A673 (cell line): ENCODE measurements at regions of chr1 and their contacts with region 1.

Region 1: GRCh38 chr1:48677306-48678287 is 99.1 kb downstream of the BEND5 start:
- DNase-seq: peak; percentile 73
- H3K4me3 ChIP-seq: no peak overlapping the region
- H3K27ac ChIP-seq: no peak overlapping the region
- H3K4me1 ChIP-seq: no peaks in the 10 kb centered on the region
- H3K27me3 ChIP-seq: no peaks in the 10 kb centered on the region
- CTCF ChIP-seq: peak; percentile 86

Region 2: GRCh38 chr1:48547251-48548220 is 130.1 kb before region 1 on chr1:
- CTCF ChIA-PET with region 1: no interaction called
- POLR2A ChIA-PET with region 1: no interaction called
- intact Hi-C with region 1: no loop called
- DNase-seq: no peak
- H3K4me3 ChIP-seq: no peak overlapping the region
- H3K27ac ChIP-seq: no peak overlapping the region
- H3K4me1 ChIP-seq: no peaks in the 10 kb centered on the region
- H3K27me3 ChIP-seq: no peaks in the 10 kb centered on the region
- CTCF ChIP-seq: no peak

Region 3: GRCh38 chr1:48817505-48818114 is 140.0 kb after region 1 on chr1:
- CTCF ChIA-PET with region 1: interaction called, 25 read pairs
- POLR2A ChIA-PET with region 1: no interaction called
- intact Hi-C with region 1: loop called (anchors 1 kb)
- DNase-seq: peak; percentile 53
- H3K4me3 ChIP-seq: no peak overlapping the region
- H3K27ac ChIP-seq: no peak overlapping the region
- H3K4me1 ChIP-seq: no peaks in the 10 kb centered on the region
- H3K27me3 ChIP-seq: no peaks in the 10 kb centered on the region
- CTCF ChIP-seq: peak; percentile 80

Region 4: GRCh38 chr1:48988633-48989197 is 311.1 kb after region 1 on chr1:
- CTCF ChIA-PET with region 1: no interaction called
- POLR2A ChIA-PET with region 1: no interaction called
- intact Hi-C with region 1: no loop called
- DNase-seq: no peak
- H3K4me3 ChIP-seq: no peak overlapping the region
- H3K27ac ChIP-seq: no peak overlapping the region
- H3K4me1 ChIP-seq: no peaks in the 10 kb centered on the region
- H3K27me3 ChIP-seq: no peaks in the 10 kb centered on the region
- CTCF ChIP-seq: no peak

Region 5: DNA sequence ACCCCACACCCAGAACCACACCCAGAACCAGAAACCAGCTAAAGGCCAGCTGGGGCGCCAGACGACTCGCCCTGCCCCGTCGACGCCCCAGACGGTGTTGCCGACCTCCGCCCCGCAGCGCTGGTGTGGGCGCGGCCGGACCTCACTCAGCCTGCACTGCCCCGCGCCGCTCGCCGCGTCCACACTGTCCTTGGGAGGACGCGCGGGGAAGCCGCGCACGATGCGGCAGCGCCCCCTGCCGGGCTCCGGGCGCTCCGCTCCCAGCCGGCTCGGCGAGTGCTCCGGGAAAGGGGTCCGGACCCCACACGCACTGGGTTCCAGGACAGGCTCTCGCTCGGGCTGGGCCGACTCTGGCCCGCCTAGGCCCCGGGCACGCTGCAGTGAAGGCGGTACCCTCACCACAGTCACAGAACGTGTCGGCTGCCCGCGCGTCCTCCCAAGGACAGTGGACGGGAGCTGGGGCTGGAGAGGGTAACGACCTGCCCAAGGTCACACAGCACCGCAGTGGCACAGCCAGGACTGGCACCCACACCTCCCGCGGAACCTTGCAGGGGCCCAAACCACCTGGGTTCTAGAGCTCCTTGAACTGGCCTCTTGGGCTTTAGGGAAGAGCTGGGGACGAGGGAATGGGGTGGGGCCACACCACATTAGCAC is 1655.5 kb after region 1 on chr1:
- CTCF ChIA-PET with region 1: interaction called, 3 read pairs
- POLR2A ChIA-PET with region 1: no interaction called
- intact Hi-C with region 1: loop called (anchors 10 kb)
- DNase-seq: peak; percentile 68
- H3K4me3 ChIP-seq: peak overlapping the region; percentile 62
- H3K27ac ChIP-seq: peak overlapping the region; percentile 53
- H3K4me1 ChIP-seq: no peaks in the 10 kb centered on the region
- H3K27me3 ChIP-seq: no peaks in the 10 kb centered on the region
- CTCF ChIP-seq: peak; percentile 81